ENCODE measurements at regions of chr11 and their contacts with region 1.

Region 1: GRCh38 chr11:2699531-2700414 is at the start of gene KCNQ1OT1:
- DNase-seq: peak; percentile 97
- H3K4me3 ChIP-seq: peak within 1 kb of the TSS; percentile 92
- H3K4me3 Mint-ChIP-seq: peak within 1 kb of the TSS; percentile 84
- H3K27ac Mint-ChIP-seq: peak within 1 kb of the TSS; percentile 90
- H3K4me1 ChIP-seq: peaks cover 30% of the 10 kb centered on the region
- H3K4me1 Mint-ChIP-seq: peaks cover 15% of the 10 kb centered on the region
- H3K27me3 ChIP-seq: no peaks in the 10 kb centered on the region
- H3K27me3 Mint-ChIP-seq: no peaks in the 10 kb centered on the region
- CTCF ChIP-seq: no peak
- total RNA-seq, gene KCNQ1OT1: 7.5 and 8.2 TPM in 2 replicates

Region 2: GRCh38 chr11:2725368-2726300 is 25.9 kb after region 1 on chr11:
- CTCF ChIA-PET with region 1: no interaction called
- POLR2A ChIA-PET with region 1: interaction called, 11 read pairs
- intact Hi-C with region 1: loop called (anchors 2 kb)
- DNase-seq: peak; percentile 77 to 86
- H3K4me3 ChIP-seq: no peak overlapping the region
- H3K4me3 Mint-ChIP-seq: peak overlapping the region; percentile 23
- H3K27ac Mint-ChIP-seq: peak overlapping the region; percentile 98
- H3K4me1 ChIP-seq: peaks cover 51% of the 10 kb centered on the region
- H3K4me1 Mint-ChIP-seq: peaks cover 26% of the 10 kb centered on the region
- H3K27me3 ChIP-seq: no peaks in the 10 kb centered on the region
- H3K27me3 Mint-ChIP-seq: no peaks in the 10 kb centered on the region
- CTCF ChIP-seq: no peak

Region 3: DNA sequence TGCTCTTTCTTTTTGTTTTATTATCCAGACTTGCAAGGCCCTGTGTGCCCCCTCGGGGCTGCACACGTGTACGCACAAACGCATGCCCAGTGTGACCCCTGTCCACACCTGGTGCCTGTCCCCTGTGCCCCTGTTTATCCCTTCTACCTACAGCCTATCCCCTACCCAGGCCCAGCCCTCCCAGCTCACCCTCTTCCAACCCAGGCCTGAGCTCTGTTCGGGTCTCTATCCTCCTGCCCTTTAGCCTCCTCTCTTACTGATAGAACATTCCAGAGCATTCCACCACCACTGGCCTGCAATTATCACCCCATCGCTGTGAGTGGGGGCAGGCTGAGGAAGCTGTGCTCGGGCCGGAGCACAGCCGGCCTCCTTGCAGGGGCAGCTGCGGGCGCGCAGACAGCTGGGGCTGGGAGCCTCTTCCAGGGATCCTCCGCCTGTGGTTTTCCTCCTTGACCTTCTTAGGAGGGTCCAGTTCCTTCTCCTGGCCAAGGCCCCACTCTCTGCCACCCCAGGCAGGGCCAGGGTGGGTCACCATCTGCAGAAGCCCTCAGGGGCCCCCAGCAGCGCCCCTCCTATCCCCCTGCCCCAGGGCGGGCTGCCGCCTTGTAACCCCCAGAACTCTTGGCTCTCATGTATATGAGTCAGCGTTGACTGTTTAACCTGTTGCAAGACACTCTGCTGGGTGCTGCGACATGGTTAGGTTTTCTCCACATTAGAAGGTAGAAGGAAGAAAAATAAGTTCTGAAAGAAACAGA is 41.8 kb after region 1 on chr11:
- CTCF ChIA-PET with region 1: no interaction called
- POLR2A ChIA-PET with region 1: interaction called, 3 read pairs
- intact Hi-C with region 1: loop called (anchors 5 kb)
- DNase-seq: peak in 1 of 2 experiments; percentile 67
- H3K4me3 ChIP-seq: no peak overlapping the region
- H3K4me3 Mint-ChIP-seq: no peak overlapping the region
- H3K27ac Mint-ChIP-seq: peak overlapping the region; percentile 81
- H3K4me1 ChIP-seq: peaks cover 34% of the 10 kb centered on the region
- H3K4me1 Mint-ChIP-seq: peaks cover 27% of the 10 kb centered on the region
- H3K27me3 ChIP-seq: no peaks in the 10 kb centered on the region
- H3K27me3 Mint-ChIP-seq: no peaks in the 10 kb centered on the region
- CTCF ChIP-seq: no peak

Region 4: DNA sequence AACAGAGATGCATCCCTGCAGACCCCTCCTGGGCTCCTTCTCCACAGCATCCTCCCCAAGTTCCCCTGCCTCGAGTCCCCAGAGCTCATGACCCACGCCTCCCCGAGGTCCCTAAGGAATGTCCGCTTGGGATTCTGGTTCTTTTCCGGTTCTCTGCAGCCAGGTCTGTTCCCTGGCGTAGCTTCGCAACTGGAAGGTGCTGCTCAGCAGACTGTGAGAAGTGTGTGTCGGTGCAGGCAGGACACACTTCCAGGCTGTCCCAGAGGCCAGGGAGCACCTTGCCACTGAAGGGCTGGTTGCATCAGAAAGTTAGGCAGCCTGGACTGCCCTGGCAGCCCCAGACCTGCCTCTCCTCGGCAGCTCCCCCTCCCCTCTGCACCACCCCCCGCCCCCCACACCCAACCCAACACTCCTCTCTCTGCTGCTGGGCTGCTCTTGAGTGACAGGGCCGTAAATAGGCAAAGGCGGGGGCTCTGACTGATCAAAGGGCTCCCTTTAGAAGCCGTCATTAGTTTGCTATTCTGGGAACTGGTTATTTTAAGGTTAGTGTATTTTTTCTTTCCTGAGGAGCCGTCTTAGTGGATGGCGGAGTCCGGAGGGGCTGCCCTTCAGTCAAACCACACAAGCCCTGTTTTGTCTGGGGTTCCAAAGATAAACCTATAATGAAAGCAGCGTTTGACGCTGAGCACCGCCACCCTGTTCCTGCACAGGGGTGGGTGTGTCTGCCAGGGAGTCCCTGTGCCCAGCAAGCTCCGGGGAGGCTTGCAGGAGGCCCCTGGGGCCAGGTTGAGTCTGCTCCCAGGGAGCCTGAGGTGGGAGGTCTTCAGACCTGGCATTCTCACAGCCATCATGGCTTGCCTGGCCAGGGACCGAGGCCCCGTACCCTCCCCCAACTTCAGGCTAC is 88.6 kb after region 1 on chr11:
- CTCF ChIA-PET with region 1: no interaction called
- POLR2A ChIA-PET with region 1: no interaction called
- intact Hi-C with region 1: loop called (anchors 2 kb)
- DNase-seq: peak; percentile 60 to 66
- H3K4me3 ChIP-seq: no peak overlapping the region
- H3K4me3 Mint-ChIP-seq: peak overlapping the region; percentile 38
- H3K27ac Mint-ChIP-seq: peak overlapping the region; percentile 79
- H3K4me1 ChIP-seq: peaks cover 8% of the 10 kb centered on the region
- H3K4me1 Mint-ChIP-seq: peaks cover 5% of the 10 kb centered on the region
- H3K27me3 ChIP-seq: no peaks in the 10 kb centered on the region; the same call in 1 of the 2 replicates
- H3K27me3 Mint-ChIP-seq: peaks cover 4% of the 10 kb centered on the region
- CTCF ChIP-seq: no peak

Region 5: DNA sequence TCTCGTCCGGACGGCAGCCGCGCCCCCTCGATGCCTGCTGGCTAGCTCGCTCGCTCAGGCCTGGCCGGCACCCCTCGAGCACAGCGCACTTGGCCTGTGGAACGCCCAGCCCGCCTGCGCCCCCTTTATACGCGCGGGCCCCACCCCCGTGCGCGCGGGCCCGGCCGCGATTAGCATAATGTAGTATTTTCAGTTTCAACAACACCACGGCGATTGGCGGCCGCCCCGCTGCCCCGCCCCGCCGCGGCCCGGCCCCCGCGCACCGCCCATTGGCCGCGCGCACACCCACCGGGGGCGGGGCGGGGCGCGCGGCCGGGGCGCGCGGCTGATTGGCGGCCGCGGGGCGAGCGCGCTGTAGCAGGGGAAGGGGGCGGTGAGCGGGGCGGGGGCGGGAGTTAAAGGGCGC is 185.9 kb after region 1 on chr11 and contains the start of gene CDKN1C:
- CTCF ChIA-PET with region 1: interaction called, 7 read pairs
- POLR2A ChIA-PET with region 1: interaction called, 7 read pairs
- intact Hi-C with region 1: loop called (anchors 2 kb)
- DNase-seq: peak; percentile 83 to 87
- H3K4me3 ChIP-seq: peak within 1 kb of the TSS; percentile 59
- H3K4me3 Mint-ChIP-seq: peak within 1 kb of the TSS; percentile 91
- H3K27ac Mint-ChIP-seq: no peak within 1 kb of the TSS
- H3K4me1 ChIP-seq: peaks cover 39% of the 10 kb centered on the region
- H3K4me1 Mint-ChIP-seq: peaks cover 12% of the 10 kb centered on the region
- H3K27me3 ChIP-seq: no peaks in the 10 kb centered on the region
- H3K27me3 Mint-ChIP-seq: peaks cover 8% of the 10 kb centered on the region
- CTCF ChIP-seq: no peak
- total RNA-seq, gene CDKN1C: 15.0 and 25.5 TPM in 2 replicates

Region 6: GRCh38 chr11:2930704-2931428 is 231.1 kb after region 1 on chr11:
- CTCF ChIA-PET with region 1: no interaction called
- POLR2A ChIA-PET with region 1: interaction called, 11 read pairs
- intact Hi-C with region 1: no loop called
- DNase-seq: peak; percentile 92 to 95
- H3K4me3 ChIP-seq: peak overlapping the region; percentile 91
- H3K4me3 Mint-ChIP-seq: peak overlapping the region; percentile 73
- H3K27ac Mint-ChIP-seq: peak overlapping the region; percentile 79
- H3K4me1 ChIP-seq: peaks cover 19% of the 10 kb centered on the region
- H3K4me1 Mint-ChIP-seq: no peaks in the 10 kb centered on the region
- H3K27me3 ChIP-seq: 0 out of 2 replicates have a peak, but pooled peaks cover 2% of the 10 kb centered on the region
- H3K27me3 Mint-ChIP-seq: no peaks in the 10 kb centered on the region
- CTCF ChIP-seq: peak; percentile 80 to 95

Measured in Caco-2 (cell line).